Activated CD4-positive, alpha-beta T cell treated with anti-CD3 and anti-CD28 coated beads, Interleukin-2, amount 10 ng/mL, durations not matched to agents 24 days and 14 days (primary cell): ENCODE measurements at regions of chr11 and their contacts with region 1.

Region 1: DNA sequence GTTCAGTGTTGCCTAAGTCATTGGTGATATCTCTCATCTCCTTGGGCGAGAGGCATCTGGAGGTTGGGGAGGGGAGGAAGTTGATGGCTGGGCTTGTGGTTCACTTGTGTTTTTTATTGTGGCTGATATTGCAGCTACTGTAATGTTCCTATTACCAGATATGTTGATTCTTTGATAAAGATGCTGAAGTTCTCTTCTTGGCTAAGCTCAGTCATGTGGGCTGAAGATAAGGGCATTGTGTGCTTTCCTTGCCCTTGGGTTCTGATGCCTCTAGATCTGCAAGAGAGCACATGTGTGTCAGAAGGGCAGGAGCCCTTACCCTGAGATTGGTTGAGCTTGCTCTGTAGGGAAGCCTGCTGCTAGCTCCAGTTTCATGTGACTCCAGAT is 12.0 kb downstream of the STX3 start:
- DNase-seq: peak; percentile 78
- H3K4me3 Mint-ChIP-seq: no peak overlapping the region
- H3K27ac Mint-ChIP-seq: peak overlapping the region; percentile 27
- H3K4me1 Mint-ChIP-seq: peaks cover 28% of the 10 kb centered on the region
- H3K27me3 Mint-ChIP-seq: no peaks in the 10 kb centered on the region

Region 2: GRCh38 chr11:59783632-59784090 is 16.4 kb after region 1 on chr11:
- intact Hi-C with region 1: loop called (anchors 2 kb)
- DNase-seq: peak; percentile 70
- H3K4me3 Mint-ChIP-seq: peak overlapping the region; percentile 36
- H3K27ac Mint-ChIP-seq: peak overlapping the region; percentile 62
- H3K4me1 Mint-ChIP-seq: peaks cover 46% of the 10 kb centered on the region
- H3K27me3 Mint-ChIP-seq: no peaks in the 10 kb centered on the region